Activated CD4-positive, alpha-beta T cell treated with anti-CD3 and anti-CD28 coated beads for 36 hours (primary cell): ENCODE measurements at regions of chr5 and their contacts with region 1.

Region 1: DNA sequence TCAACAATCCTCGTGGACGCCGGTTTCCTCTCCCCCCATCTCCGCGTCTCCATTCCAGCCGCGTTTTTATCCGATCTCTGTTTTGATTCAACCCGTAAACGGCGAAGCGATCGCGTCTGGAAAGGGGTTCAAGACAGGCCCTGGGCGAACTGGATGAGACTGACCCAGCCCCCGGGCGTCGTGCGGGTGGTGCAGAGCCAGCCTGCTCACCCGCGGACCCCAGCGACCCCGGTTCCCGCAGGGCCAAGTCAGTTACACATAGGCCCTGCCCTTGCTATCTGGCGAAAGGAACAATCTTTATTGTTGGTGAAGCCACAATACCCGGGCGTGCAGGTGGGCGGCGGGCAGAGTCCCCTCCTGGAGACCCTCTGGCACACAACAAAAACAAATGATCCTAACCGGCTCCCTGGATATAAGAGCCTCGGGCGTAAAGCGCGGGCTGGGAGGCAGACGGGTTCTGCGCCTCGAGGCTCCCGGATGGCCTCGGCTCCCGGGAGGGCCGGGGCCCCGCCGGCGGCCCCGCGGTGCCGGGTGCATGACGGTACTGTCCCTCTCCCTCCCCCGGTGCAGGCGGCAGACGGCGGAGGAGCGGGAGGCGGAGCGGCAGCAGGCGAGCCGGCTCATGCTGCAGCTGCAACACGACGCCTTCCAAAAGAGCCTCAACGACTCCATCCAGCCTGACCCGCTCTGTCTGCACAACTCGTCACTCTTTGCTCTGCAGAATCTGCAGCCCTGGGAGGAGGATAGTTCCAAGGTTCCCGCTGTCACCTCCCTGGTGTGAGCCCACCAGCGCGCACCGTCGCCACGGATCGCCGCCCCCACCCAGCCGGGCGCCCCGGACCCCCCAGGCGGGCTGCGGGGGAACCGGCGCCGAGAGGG is 2.0 kb downstream of the TLX3 start:
- DNase-seq: peak; percentile 42
- ATAC-seq: no peak
- H3K4me3 Mint-ChIP-seq: peak overlapping the region; percentile 12
- H3K27ac Mint-ChIP-seq: no peak overlapping the region
- H3K4me1 Mint-ChIP-seq: peaks cover 22% of the 10 kb centered on the region
- H3K27me3 Mint-ChIP-seq: peaks cover 64% of the 10 kb centered on the region

Region 2: DNA sequence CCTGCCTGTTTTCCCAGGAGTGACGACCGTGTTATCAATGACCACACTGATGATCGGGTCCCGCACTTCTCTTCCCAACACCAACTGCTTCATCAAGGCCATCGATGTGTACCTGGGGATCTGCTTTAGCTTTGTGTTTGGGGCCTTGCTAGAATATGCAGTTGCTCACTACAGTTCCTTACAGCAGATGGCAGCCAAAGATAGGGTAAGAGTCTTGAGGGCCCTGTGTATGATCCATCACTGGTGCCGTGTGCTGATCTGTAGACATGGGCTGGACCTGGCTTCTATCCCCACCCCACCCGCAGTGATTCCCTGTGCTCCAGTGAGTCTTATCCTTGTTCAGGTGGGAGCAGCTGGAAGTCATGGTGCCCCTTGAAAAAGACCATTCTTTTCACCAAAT is 501.5 kb before region 1 on chr5:
- CTCF ChIA-PET with region 1: no interaction called
- POLR2A ChIA-PET with region 1: no interaction called
- intact Hi-C with region 1: no loop called
- DNase-seq: no peak
- ATAC-seq: no peak
- H3K4me3 Mint-ChIP-seq: no peak overlapping the region
- H3K27ac Mint-ChIP-seq: no peak overlapping the region
- H3K4me1 Mint-ChIP-seq: no peaks in the 10 kb centered on the region
- H3K27me3 Mint-ChIP-seq: peaks cover 17% of the 10 kb centered on the region

Region 3: DNA sequence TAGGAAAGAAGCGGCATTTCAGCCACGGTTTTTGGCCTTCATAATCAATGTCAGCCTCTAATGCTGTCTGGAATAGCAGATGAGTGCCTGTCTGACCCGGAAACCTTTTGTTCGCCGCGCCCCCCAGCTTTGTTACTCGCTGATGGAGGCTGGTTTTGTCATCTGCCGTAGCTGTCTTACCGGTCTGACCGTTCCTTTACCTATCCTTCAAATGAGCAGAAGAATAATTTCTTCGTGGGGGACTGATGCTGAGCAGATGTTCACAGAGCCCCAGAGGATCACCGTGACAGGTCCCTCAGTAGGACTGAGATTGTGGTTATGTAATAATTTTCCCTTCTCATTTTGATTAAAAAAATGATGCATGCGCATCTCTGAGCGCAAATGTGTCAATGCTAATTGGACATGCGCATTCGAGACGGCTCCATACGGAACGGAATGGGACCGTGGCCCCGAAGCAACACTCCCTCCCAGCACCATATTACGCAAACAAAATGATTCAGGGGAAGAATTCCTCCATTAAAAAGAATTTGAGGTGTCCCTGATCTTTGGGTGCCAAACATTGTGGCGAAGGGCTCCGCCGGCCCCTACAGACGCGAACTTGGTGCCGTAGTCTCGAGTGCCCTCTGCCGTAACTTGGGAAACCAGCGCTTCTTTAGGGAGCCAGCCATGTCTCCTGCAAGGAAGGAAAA is 25.6 kb after region 1 on chr5:
- CTCF ChIA-PET with region 1: no interaction called
- POLR2A ChIA-PET with region 1: no interaction called
- intact Hi-C with region 1: loop called in 1 of 2 experiments (anchors 2 kb)
- DNase-seq: peak; percentile 60
- ATAC-seq: peak; percentile 61
- H3K4me3 Mint-ChIP-seq: peak overlapping the region; percentile 39
- H3K27ac Mint-ChIP-seq: no peak overlapping the region
- H3K4me1 Mint-ChIP-seq: peaks cover 3% of the 10 kb centered on the region
- H3K27me3 Mint-ChIP-seq: peaks cover 26% of the 10 kb centered on the region

Region 4: DNA sequence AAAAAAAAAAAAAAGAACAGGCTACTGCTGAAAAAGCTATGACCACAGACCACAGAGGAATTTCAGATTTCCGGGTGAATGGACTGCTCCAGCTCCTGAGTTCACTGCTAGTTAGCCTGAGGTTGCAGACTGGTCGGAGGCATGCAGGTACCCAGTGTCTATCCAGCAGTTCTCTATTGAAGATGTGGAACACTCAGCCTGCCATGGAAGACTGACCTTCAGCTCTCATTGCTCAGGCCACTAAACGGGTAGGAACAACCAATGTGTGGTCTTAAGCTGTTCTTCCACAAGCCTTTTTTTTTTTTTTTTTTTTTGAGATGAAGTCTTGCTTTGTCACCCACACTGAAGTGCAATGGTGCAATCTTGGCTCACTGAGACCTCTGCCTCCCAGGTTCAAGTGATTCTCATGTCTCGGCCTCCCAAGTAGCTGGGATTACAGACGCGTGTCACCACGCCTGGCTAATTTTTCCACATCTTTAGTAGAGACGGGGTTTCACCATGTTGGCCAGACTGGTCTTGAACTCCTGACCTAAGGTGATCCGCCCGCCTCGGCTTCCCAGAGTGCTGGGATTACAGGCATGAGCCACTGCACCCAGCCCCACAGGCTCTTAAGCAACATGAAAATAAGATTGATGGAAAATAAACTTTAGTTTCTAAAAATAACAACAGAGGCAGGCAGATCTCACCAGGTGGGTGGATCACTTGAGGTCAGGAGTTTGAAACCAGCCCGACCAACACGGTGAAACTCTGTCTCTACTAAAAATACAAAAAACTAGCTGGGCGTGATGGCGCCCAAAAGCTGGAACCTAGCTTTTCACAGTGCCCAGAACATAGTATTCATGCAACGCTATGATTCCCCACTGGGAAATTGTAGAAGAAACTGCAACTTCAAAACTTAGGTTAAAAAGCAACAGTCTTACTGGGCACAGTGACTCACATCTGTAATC is 56.6 kb after region 1 on chr5:
- CTCF ChIA-PET with region 1: no interaction called
- POLR2A ChIA-PET with region 1: no interaction called
- intact Hi-C with region 1: no loop called
- DNase-seq: no peak
- ATAC-seq: peak; percentile 54
- H3K4me3 Mint-ChIP-seq: no peak overlapping the region
- H3K27ac Mint-ChIP-seq: no peak overlapping the region
- H3K4me1 Mint-ChIP-seq: no peaks in the 10 kb centered on the region
- H3K27me3 Mint-ChIP-seq: peaks cover 19% of the 10 kb centered on the region

Region 5: DNA sequence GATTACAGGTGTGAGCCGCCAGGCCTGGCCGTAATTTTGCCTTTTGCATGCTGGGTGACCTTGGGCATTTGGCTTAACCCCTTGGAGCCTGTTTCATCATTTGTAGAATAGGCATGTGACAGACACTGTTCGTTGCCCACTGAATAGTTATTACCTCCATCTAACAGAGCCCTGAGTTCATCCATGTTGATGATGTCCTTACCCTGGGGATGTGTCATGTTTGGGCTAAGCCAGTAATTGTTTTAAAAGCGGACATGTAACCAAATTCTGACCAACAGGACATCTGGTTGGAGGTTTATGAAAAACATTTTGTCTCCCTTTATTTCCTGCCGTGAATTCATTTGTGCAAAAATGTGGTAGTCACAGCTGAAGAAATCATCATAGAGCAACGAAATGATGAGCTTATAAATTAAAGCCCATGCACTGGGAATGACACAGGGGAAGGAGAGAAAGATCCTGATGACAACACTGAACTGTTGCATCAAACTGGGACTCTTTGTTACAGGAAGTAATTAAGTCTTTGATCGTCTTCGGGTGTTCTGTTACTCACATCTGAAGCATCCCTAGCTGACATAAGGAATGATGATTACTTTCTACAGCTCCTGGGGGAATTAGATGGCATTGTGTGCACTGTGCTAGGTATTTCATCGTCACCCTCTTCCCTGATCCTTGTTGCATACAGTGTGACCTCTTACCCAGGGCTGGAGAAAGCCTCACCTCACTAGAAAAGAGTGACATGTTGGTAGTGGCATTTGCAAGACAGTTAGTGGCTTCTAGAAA is 226.2 kb after region 1 on chr5:
- CTCF ChIA-PET with region 1: no interaction called
- POLR2A ChIA-PET with region 1: no interaction called
- intact Hi-C with region 1: no loop called
- DNase-seq: no peak
- ATAC-seq: no peak
- H3K4me3 Mint-ChIP-seq: no peak overlapping the region
- H3K27ac Mint-ChIP-seq: no peak overlapping the region
- H3K4me1 Mint-ChIP-seq: no peaks in the 10 kb centered on the region
- H3K27me3 Mint-ChIP-seq: peaks cover 37% of the 10 kb centered on the region

Region 6: GRCh38 chr5:173232499-173233346 is 1921.7 kb after region 1 on chr5:
- CTCF ChIA-PET with region 1: no interaction called
- POLR2A ChIA-PET with region 1: no interaction called
- intact Hi-C with region 1: loop called in 1 of 2 experiments (anchors 5 kb)
- DNase-seq: peak; percentile 42
- ATAC-seq: peak; percentile 17
- H3K4me3 Mint-ChIP-seq: peak overlapping the region; percentile 14
- H3K27ac Mint-ChIP-seq: no peak overlapping the region
- H3K4me1 Mint-ChIP-seq: peaks cover 43% of the 10 kb centered on the region
- H3K27me3 Mint-ChIP-seq: peaks cover 87% of the 10 kb centered on the region